Spleen (tissue), 13 donors: ENCODE measurements at regions of chr1 and their contacts with region 1.

Region 1: GRCh38 chr1:117512743-117513321 is 93.0 kb upstream of the TENT5C start:
- DNase-seq: no peak
- H3K4me3 ChIP-seq: no peak overlapping the region
- H3K27ac ChIP-seq: no peak overlapping the region
- H3K4me1 ChIP-seq: no peaks in the 10 kb centered on the region
- H3K27me3 ChIP-seq: no peaks in the 10 kb centered on the region
- CTCF ChIP-seq: peak in 10 of 11 experiments; percentile 19 to 64 (median 48)
- POLR2A ChIP-seq: no peak

Region 2: DNA sequence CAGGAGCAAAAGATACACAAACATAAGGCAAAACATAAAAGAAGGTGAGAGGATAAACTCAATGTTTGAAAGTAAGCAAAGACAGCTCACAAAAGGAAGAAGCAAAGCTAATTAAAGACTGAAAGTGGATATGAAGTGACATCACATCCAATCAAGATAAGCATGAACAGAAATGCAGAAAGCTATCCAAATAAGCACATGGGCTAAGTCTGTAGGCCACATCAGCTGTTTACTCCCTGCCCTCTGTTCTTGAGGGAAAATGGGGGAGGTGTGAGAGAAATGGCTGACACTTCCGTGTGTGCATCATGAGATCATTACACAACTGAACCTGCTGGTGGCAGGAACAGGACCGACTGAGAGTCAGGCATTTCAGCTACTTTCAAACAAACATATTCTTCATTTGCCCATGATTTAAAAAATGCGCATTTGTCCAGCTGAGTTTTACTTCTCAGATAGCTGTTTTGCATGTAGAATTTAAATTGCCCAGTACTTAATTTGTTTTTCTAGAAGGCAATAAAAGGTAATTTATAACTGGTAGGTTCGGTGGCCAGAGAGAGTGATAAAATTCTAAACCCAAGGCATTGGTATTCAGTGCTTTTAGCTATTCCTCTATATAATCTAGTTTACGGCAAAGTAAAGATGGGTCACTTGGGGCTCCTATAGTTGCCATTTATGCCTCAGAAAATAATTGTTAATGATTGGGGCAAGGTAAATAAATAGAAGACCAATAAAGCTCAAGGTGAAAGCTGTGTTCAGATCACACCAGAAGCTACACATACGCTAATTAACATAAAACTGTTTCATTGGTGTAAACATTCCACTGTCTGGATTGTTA is 172.7 kb before region 1 on chr1:
- intact Hi-C with region 1: no loop called
- DNase-seq: no peak
- H3K4me3 ChIP-seq: no peak overlapping the region
- H3K27ac ChIP-seq: no peak overlapping the region
- H3K4me1 ChIP-seq: peaks cover 0 to 8% (median 0%) of the 10 kb centered on the region in 6 donors
- H3K27me3 ChIP-seq: no peaks in the 10 kb centered on the region
- CTCF ChIP-seq: no peak
- POLR2A ChIP-seq: no peak

Region 3: DNA sequence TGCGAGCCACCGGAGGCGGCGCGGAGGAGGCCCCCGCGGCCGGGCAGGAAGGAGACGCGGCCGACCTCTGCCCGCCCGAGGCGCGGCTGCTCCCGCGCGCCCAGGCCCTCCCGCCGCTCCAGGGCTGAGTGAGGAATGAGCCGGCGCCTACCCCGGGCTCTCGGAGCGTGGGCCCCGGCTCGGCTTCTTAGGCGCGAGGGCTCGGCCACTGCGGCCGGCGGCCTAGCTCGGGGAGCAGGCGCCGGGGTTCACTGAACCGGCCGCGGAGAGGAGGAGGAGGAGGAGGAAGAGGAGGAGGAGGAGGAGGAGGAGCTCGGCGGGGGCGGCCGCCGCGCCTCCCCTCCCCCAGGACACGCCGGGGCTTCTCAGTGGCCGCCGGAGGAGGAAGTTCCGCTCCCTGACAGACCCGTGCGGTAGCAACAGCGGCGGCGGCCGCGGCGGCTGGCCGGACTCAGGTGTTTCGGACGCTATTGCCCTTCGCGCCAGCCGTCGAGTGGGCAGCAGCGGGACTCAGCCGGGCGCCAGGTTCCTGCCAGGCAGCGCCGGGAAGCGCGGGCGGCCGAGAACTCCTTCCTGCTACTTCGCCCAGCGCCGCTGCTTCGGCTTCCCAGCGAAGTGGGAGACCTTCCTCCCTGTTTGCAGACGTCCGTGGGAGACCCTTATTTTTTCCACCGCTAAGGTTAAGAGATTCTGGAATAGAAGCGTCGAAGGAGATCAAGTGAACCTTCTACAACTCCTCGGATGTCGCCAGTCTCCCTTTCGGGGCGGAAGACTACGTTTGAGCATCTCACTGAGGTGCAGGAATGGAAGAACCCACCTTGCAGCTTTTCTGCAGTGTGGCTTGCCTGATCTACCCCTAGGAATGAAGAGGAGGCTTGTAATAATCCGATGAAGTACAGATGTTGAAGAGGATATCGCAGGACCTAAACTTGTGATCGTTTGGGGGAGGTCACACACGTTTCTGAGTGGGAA is 145.5 kb before region 1 on chr1 and contains the start of gene MAN1A2:
- intact Hi-C with region 1: loop called (anchors 10 kb)
- DNase-seq: peak; percentile 98
- H3K4me3 ChIP-seq: peak within 1 kb of the TSS; percentile 62 to 96 (median 90)
- H3K27ac ChIP-seq: peak within 1 kb of the TSS; percentile 94 to 99 (median 98)
- H3K4me1 ChIP-seq: peaks cover 36 to 79% (median 66%) of the 10 kb centered on the region in 6 donors
- H3K27me3 ChIP-seq: no peaks in the 10 kb centered on the region
- CTCF ChIP-seq: peak in 2 of 11 experiments; percentile 13 to 33
- POLR2A ChIP-seq: peak in 1 of 3 donors; percentile 75
- total RNA-seq, gene MAN1A2: 38.3 to 52.4 (median 46.0) TPM

Region 4: DNA sequence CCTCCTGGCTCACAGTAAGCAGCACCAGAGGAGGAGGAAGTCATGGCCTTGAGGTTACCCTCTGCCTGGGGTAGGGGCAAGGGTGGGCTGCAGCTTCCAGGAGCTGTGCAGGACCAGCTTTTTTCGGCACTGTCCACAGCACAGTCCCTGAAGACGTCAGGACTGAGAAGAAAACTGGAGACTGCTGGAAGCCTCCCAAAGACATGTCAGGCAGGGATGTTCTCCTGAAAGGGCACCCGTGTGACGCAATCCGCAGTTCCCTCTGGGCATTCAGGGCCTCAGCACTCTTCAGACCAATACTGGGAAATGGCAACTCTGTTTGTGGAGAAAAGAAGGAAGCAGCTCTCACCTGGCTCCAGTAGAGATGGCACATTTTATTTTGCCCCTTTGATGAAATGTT is 28.2 kb after region 1 on chr1:
- intact Hi-C with region 1: no loop called
- DNase-seq: no peak
- H3K4me3 ChIP-seq: no peak overlapping the region
- H3K27ac ChIP-seq: no peak overlapping the region
- H3K4me1 ChIP-seq: peaks cover 0 to 20% (median 6%) of the 10 kb centered on the region in 6 donors
- H3K27me3 ChIP-seq: peaks cover 0 to 2% (median 0%) of the 10 kb centered on the region in 7 donors
- CTCF ChIP-seq: no peak
- POLR2A ChIP-seq: no peak

Region 5: GRCh38 chr1:117758444-117759316 is 245.8 kb after region 1 on chr1:
- intact Hi-C with region 1: loop called (anchors 5 kb)
- DNase-seq: peak; percentile 81
- H3K4me3 ChIP-seq: peak overlapping the region in 7 of 8 donors; percentile 10 to 56 (median 22)
- H3K27ac ChIP-seq: peak overlapping the region in 2 of 8 donors; percentile 24 to 39
- H3K4me1 ChIP-seq: peaks cover 0 to 18% (median 12%) of the 10 kb centered on the region in 6 donors
- H3K27me3 ChIP-seq: peaks cover 0 to 15% (median 4%) of the 10 kb centered on the region in 7 donors
- CTCF ChIP-seq: peak; percentile 58 to 88 (median 78)
- POLR2A ChIP-seq: no peak

Region 6: GRCh38 chr1:117895482-117896114 is 382.8 kb after region 1 on chr1:
- intact Hi-C with region 1: loop called (anchors 10 kb)
- DNase-seq: no peak
- H3K4me3 ChIP-seq: no peak overlapping the region
- H3K27ac ChIP-seq: no peak overlapping the region
- H3K4me1 ChIP-seq: no peaks in the 10 kb centered on the region
- H3K27me3 ChIP-seq: no peaks in the 10 kb centered on the region
- CTCF ChIP-seq: peak in 9 of 11 experiments; percentile 29 to 69 (median 60)
- POLR2A ChIP-seq: no peak